ENCODE measurements at regions of chr11 and their contacts with region 1.

Region 1: DNA sequence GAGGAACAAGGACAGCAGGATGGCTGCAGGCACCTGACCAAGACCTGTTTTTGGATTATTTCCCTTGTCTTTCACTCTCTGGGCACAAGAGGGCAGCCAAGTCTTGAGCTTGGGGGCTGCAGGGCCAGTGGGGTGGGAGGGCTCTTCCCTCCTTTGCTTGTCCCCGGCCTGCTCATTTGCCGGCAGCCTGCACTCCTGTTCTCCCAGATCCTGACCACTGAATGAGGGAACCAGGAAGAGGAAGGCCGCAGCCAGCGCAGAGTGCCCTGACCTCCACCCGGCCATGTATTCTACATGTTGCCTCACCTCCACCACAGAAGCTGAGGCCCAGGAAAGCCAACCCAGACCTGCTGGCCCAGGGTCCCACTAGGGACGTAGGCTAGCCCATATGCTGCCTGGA is 15.5 kb upstream of the NNMT start:
- DNase-seq: peak; percentile 88
- H3K4me3 Mint-ChIP-seq: peak overlapping the region; percentile 35
- H3K27ac Mint-ChIP-seq: peak overlapping the region; percentile 40
- H3K4me1 Mint-ChIP-seq: peaks cover 56% of the 10 kb centered on the region
- H3K27me3 Mint-ChIP-seq: no peaks in the 10 kb centered on the region
- CTCF ChIP-seq: peak; percentile 78

Region 2: GRCh38 chr11:113721462-113722066 is 559.1 kb before region 1 on chr11:
- CTCF ChIA-PET with region 1: no interaction called
- POLR2A ChIA-PET with region 1: no interaction called
- intact Hi-C with region 1: no loop called
- DNase-seq: peak; percentile 54
- H3K4me3 Mint-ChIP-seq: no peak overlapping the region
- H3K27ac Mint-ChIP-seq: no peak overlapping the region
- H3K4me1 Mint-ChIP-seq: no peaks in the 10 kb centered on the region
- H3K27me3 Mint-ChIP-seq: no peaks in the 10 kb centered on the region
- CTCF ChIP-seq: no peak

Region 3: DNA sequence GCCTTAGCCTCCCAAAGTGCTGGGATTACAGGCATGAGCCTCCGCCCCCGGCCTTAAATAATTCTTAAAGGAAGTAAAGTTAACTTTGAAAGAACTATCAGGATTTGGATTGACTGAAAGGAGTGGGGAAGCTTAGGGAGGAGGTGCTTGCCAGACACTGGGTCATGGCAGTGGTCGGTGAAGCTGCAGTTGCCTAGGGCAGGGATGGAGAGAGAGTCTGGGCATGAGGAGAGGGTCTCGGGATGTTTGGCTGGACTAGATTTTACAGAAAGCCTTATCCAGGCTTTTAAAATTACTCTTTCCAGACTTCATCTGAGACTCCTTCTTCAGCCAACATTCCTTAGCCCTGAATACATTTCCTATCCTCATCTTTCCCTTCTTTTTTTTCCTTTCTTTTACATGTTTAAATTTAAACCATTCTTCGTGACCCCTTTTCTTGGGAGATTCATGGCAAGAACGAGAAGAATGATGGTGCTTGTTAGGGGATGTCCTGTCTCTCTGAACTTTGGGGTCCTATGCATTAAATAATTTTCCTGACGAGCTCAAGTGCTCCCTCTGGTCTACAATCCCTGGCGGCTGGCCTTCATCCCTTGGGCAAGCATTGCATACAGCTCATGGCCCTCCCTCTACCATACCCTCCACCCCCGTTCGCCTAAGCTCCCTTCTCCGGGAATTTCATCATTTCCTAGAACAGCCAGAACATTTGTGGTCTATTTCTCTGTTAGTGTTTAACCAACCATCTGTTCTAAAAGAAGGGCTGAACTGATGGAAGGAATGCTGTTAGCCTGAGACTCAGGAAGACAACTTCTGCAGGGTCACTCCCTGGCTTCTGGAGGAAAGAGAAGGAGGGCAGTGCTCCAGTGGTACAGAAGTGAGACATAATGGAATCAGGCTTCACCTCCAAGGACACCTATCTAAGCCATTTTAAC is 15.2 kb after region 1 on chr11 and contains the start of gene NNMT:
- CTCF ChIA-PET with region 1: interaction called, 9 read pairs
- POLR2A ChIA-PET with region 1: interaction called, 46 read pairs
- intact Hi-C with region 1: loop called (anchors 1 kb)
- DNase-seq: peak; percentile 99
- H3K4me3 Mint-ChIP-seq: peak within 1 kb of the TSS; percentile 78
- H3K27ac Mint-ChIP-seq: peak within 1 kb of the TSS; percentile 98
- H3K4me1 Mint-ChIP-seq: peaks cover 37% of the 10 kb centered on the region
- H3K27me3 Mint-ChIP-seq: no peaks in the 10 kb centered on the region
- CTCF ChIP-seq: no peak
- total RNA-seq, gene NNMT: 429 and 638 TPM in 2 replicates

Region 4: DNA sequence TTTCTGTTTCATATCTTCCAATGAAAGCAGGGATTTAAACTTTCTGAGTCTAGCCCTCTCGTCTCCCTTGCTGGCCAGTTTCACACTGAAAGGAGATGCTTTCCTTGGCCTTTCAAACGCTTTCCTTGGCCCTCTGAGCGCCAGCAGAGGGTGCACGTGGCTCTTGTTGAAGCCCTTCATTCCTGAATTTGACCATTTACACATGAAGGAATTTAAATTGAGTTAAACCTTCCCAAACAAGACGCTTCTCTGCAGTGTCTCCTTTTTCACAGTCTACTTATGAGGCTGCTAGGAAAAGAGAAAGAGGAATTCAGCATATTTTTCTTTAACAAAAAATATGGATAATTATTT is 37.1 kb after region 1 on chr11:
- CTCF ChIA-PET with region 1: interaction called, 5 read pairs
- POLR2A ChIA-PET with region 1: interaction called, 3 read pairs
- intact Hi-C with region 1: loop called (anchors 2 kb)
- DNase-seq: peak; percentile 59
- H3K4me3 Mint-ChIP-seq: no peak overlapping the region
- H3K27ac Mint-ChIP-seq: no peak overlapping the region
- H3K4me1 Mint-ChIP-seq: peaks cover 21% of the 10 kb centered on the region
- H3K27me3 Mint-ChIP-seq: no peaks in the 10 kb centered on the region
- CTCF ChIP-seq: peak; percentile 12

Region 5: DNA sequence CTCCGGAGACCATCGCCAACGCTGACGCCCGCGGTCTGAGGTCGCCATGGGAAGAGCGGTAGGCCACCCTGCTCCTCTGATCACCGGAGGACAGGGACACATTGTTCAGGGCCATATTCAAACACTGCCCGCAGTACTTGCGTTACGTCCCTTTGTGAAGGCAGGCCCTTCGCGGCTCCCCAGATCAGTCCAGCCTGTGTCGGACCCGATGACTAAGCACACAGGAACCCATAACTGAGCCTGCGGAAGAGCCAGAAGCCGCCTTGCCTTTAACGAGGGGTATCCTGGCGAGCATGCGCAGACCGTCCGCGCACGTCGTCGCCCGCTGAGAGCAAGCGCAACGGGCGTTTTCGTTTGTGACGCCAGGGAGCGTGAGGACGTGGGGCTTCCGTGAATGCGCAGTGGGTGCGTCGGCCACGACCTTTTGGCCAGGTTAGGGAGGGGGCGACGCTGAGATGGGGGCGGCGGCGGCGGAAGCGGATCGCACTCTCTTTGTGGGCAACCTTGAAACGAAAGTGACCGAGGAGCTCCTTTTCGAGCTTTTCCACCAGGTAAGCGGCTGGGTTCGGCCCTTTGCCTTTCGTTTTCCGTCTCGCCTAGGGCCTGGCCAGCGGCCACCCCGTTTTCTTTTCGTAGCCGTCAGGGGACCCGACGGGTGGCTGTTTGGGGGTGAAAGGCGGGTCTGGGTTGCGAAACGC is 119.7 kb after region 1 on chr11 and contains the starts of genes C11orf71 and RBM7:
- CTCF ChIA-PET with region 1: interaction called, 3 read pairs
- POLR2A ChIA-PET with region 1: no interaction called
- intact Hi-C with region 1: loop called (anchors 1 kb)
- DNase-seq: peak; percentile 99
- H3K4me3 Mint-ChIP-seq: peak within 1 kb of the TSS; percentile 92
- H3K27ac Mint-ChIP-seq: peak within 1 kb of the TSS; percentile 100
- H3K4me1 Mint-ChIP-seq: peaks cover 39% of the 10 kb centered on the region
- H3K27me3 Mint-ChIP-seq: no peaks in the 10 kb centered on the region
- CTCF ChIP-seq: no peak
- total RNA-seq, gene C11orf71: 3.9 and 5.6 TPM in 2 replicates
- total RNA-seq, gene RBM7: 42.7 and 46.4 TPM in 2 replicates

Region 6: GRCh38 chr11:114606003-114606801 is 325.5 kb after region 1 on chr11:
- CTCF ChIA-PET with region 1: no interaction called
- POLR2A ChIA-PET with region 1: no interaction called
- intact Hi-C with region 1: loop called (anchors 5 kb)
- DNase-seq: peak; percentile 27
- H3K4me3 Mint-ChIP-seq: no peak overlapping the region
- H3K27ac Mint-ChIP-seq: no peak overlapping the region
- H3K4me1 Mint-ChIP-seq: no peaks in the 10 kb centered on the region
- H3K27me3 Mint-ChIP-seq: no peaks in the 10 kb centered on the region
- CTCF ChIP-seq: no peak